Posterior vena cava (tissue), 2 donors: ENCODE measurements at regions of chr4 and their contacts with region 1.

Region 1: DNA sequence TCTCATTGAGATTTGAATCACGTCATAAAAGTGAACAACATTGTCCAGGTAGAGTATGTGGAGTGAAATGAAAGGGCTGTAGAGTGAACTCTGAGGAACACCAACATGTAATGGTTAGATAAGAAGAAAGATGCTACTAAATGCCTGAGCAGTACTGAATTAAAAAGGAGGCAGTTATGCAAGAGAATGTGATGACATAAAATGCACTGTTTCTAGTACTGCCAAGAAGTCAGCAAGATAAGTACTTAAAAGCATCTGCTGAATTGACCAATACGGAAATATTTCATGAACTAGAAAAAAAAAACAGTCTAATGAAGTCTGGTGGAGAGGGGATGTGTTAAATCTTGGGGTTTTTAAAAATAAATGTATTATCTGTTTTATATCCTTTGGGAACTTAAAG is 583.8 kb upstream of the GALNT7 start:
- DNase-seq: no peak

Region 2: DNA sequence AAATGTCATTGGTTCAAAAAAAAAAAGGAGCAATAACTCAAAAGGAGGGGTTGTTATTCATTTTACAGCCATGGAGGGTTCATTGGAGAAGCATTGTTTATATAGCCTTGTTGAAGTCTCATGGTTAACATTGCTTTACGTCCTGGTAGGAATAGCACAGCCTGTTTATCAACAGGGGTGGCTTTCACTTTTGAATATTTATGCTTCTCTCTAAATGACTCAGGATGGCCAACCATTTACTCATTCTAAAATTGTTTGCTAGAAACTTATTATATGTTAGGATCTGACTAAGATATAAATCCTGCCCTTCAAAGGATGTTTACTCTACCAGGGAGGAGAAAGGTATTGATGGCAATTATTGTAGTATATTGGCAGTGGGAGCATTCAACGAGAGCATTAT is 1305.7 kb before region 1 on chr4:
- intact Hi-C with region 1: loop called in 1 of 2 experiments (anchors 5 kb)
- DNase-seq: no peak